OCI-LY7 (cell line): ENCODE measurements at regions of chr20 and their contacts with region 1.

Region 1: DNA sequence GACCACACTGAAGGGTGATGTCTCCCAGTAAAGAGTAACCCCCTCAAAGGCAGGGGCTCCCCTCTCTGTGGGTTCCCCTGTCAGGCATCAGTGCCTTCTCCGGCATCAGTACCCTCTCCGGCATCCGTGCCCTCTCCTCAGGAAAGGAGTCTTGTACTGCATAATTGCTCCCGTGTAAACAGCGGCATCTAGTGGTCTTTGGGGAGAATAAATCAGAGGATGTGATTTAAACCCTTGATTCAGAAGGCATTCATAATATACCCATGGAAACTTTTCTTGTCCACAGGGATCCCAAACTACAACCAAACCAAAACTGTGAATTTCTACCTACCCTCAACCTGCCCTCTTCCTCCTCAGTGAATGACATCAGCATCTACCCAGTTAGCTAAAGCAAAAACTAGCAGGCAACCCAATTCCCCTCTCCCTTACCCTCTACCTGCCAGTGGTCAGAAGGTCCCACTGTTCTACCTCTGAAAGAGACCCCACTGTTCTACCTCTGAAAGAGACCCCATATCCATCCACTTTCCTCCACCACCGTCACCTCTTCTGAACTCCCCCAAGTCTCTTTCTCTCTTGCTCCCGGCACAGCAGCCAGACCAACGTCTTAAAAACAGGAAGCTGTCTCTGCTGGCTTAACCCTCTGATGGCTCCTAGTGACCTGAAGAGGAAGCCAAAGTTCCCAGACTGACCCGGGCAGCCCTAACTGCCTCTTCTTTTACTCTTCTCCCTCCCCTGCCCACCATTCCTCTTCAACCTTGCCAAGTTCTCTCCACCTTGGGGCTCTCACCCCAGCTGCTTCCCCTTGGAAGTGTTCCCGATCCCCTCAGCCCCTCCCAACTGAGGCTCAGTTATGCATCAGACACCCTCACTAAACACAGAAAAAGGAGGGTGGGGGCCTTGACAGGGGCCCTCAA is 27.2 kb downstream of the UBE2V1 start:
- DNase-seq: peak; percentile 76
- H3K4me3 ChIP-seq: peak overlapping the region; percentile 53
- H3K27ac ChIP-seq: peak overlapping the region; percentile 34
- H3K4me1 ChIP-seq: peaks cover 16% of the 10 kb centered on the region
- CTCF ChIP-seq: peak; percentile 97

Region 2: DNA sequence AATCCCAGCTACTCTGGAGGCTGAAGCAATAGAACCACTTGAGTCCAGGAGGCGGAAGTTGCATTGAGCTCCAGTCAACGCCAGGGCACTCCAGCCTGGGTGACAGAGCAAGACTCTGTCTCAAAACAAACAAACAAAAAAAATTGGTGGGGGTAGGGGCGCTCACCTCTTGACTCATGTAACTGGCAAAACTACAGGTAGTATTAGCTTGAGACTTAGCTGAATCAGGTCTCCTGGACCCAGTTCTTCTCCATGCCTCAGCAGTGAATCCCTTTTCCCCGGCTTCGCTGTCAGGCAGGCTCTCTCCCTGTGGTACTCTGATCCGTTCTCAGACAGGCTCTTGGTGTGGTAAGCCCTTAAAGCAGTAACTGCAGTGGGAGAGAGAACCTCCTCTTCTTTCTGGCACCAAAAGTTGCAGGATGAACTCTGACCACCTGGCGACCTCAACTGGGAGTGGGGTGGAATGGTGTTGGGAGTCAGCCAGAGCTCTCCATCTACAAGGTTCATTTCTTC is 260.1 kb before region 1 on chr20:
- CTCF ChIA-PET with region 1: no interaction called
- POLR2A ChIA-PET with region 1: no interaction called
- intact Hi-C with region 1: no loop called
- DNase-seq: no peak
- H3K4me3 ChIP-seq: no peak overlapping the region
- H3K27ac ChIP-seq: no peak overlapping the region
- H3K4me1 ChIP-seq: peaks cover 42% of the 10 kb centered on the region
- CTCF ChIP-seq: no peak

Region 3: DNA sequence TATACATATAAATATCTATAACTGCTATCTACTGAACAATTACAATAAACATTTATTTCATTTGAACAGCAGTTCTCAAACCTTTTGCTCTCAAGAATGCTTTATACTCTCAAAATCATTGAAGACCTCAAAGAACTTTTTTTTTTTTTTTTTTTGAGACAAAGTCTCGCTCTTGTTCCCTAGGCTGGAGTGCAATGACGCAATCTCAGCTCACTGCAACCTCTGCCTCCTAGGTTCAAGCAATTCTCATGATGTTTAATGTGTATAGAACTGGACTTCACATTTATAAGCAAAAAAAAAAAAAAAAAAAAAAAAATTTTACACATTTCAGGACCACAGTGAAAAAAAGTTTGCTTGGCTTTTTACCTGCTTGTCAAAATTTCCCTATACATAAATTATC is 15.6 kb after region 1 on chr20:
- CTCF ChIA-PET with region 1: interaction called, 3 read pairs
- POLR2A ChIA-PET with region 1: interaction called, 10 read pairs
- intact Hi-C with region 1: no loop called
- DNase-seq: no peak
- H3K4me3 ChIP-seq: no peak overlapping the region
- H3K27ac ChIP-seq: no peak overlapping the region
- H3K4me1 ChIP-seq: peaks cover 10% of the 10 kb centered on the region
- CTCF ChIP-seq: no peak

Region 4: GRCh38 chr20:50110141-50110925 is 24.6 kb after region 1 on chr20:
- CTCF ChIA-PET with region 1: no interaction called
- POLR2A ChIA-PET with region 1: interaction called, 5 read pairs
- intact Hi-C with region 1: loop called (anchors 2 kb)
- DNase-seq: peak; percentile 79
- H3K4me3 ChIP-seq: peak overlapping the region; percentile 88
- H3K27ac ChIP-seq: peak overlapping the region; percentile 36
- H3K4me1 ChIP-seq: peaks cover 51% of the 10 kb centered on the region
- CTCF ChIP-seq: no peak

Region 5: DNA sequence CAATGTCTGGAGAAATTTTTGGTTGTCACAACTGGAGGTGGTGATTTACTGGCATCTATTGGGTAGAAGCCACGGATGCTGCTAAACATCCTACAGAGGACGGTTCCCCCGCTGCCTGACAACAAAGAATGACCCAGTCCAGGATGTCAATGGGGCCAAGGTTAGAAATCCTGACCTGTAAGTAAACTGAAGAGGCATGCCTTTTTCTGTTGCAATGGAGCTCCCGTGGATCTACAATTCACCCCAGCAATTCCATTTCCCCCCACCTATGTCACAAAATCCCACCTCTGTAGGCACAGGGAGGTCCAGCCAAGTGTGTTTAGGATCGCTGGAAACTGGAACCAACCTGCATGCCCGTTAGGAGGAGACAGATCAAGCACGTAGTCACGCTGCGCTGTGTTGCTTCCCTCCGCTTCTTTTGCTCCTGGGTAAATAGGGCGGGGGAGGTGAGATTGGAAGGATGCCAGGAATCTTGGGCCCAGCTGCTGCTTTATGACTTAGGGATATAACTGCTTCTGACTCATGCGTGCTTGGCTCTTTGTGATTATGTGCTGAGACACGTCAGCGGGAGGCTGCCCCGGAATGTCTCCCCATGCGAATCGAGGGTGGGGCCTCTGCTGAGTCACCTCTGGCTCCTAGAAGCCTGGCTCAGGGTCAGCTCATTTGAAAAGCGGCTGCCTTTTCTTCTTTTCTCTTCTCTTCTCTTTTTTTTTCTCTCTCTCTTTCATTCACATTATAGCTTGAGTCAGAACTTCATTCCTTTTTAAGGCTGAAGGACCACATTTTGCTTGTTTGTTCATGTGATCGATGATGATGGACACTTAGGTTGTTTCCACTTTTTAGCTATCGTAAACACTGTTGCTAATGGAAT is 80.2 kb after region 1 on chr20:
- CTCF ChIA-PET with region 1: no interaction called
- POLR2A ChIA-PET with region 1: no interaction called
- intact Hi-C with region 1: loop called (anchors 5 kb)
- DNase-seq: no peak
- H3K4me3 ChIP-seq: no peak overlapping the region
- H3K27ac ChIP-seq: no peak overlapping the region
- H3K4me1 ChIP-seq: no peaks in the 10 kb centered on the region
- CTCF ChIP-seq: no peak